Panc1 (cell line): ENCODE measurements at regions of chr22 and their contacts with region 1.

Region 1: GRCh38 chr22:43853328-43853931 is 8.9 kb downstream of the SULT4A1 start:
- DNase-seq: no peak
- ATAC-seq: no peak
- H3K4me3 ChIP-seq: no peak overlapping the region
- H3K27ac ChIP-seq: no peak overlapping the region
- H3K4me1 ChIP-seq: no peaks in the 10 kb centered on the region
- H3K27me3 ChIP-seq: no peaks in the 10 kb centered on the region
- CTCF ChIP-seq: no peak

Region 2: GRCh38 chr22:43207849-43208702 is 645.4 kb before region 1 on chr22:
- CTCF ChIA-PET with region 1: no interaction called
- POLR2A ChIA-PET with region 1: interaction called, 10 read pairs
- in situ Hi-C with region 1: no loop called
- intact Hi-C with region 1: no loop called
- DNase-seq: no peak
- ATAC-seq: no peak
- H3K4me3 ChIP-seq: no peak overlapping the region
- H3K27ac ChIP-seq: no peak overlapping the region
- H3K4me1 ChIP-seq: no peaks in the 10 kb centered on the region
- H3K27me3 ChIP-seq: no peaks in the 10 kb centered on the region
- CTCF ChIP-seq: no peak

Region 3: DNA sequence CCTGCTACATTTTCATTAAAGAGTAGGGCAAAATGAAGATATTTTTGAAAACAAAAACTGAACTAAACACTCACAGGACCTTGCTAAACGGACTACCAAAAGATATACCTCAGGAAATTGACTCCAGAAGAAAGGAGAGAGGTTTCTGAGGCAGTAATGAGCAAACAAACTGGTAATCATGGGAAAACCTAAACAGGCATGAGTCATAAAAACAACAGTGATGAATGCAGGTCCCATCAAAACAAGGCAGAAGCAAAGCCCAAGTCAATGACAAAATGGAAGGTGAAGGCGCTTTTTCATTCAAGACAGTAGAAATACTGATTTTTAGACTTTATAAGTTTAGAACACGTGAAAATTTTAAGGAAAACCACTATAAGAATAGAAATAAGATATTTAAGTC is 145.8 kb before region 1 on chr22:
- CTCF ChIA-PET with region 1: no interaction called
- POLR2A ChIA-PET with region 1: no interaction called
- in situ Hi-C with region 1: no loop called
- intact Hi-C with region 1: no loop called
- DNase-seq: peak; percentile 46
- ATAC-seq: peak; percentile 69; the same call in 1 of the 2 replicates
- H3K4me3 ChIP-seq: no peak overlapping the region
- H3K27ac ChIP-seq: no peak overlapping the region
- H3K4me1 ChIP-seq: no peaks in the 10 kb centered on the region
- H3K27me3 ChIP-seq: no peaks in the 10 kb centered on the region
- CTCF ChIP-seq: no peak

Region 4: GRCh38 chr22:43867839-43868652 is 14.6 kb after region 1 on chr22:
- CTCF ChIA-PET with region 1: no interaction called
- POLR2A ChIA-PET with region 1: no interaction called
- in situ Hi-C with region 1: no loop called
- intact Hi-C with region 1: no loop called
- DNase-seq: no peak
- ATAC-seq: no peak
- H3K4me3 ChIP-seq: no peak overlapping the region
- H3K27ac ChIP-seq: no peak overlapping the region
- H3K4me1 ChIP-seq: no peaks in the 10 kb centered on the region
- H3K27me3 ChIP-seq: no peaks in the 10 kb centered on the region; the same call in 1 of the 2 replicates
- CTCF ChIP-seq: no peak

Region 5: DNA sequence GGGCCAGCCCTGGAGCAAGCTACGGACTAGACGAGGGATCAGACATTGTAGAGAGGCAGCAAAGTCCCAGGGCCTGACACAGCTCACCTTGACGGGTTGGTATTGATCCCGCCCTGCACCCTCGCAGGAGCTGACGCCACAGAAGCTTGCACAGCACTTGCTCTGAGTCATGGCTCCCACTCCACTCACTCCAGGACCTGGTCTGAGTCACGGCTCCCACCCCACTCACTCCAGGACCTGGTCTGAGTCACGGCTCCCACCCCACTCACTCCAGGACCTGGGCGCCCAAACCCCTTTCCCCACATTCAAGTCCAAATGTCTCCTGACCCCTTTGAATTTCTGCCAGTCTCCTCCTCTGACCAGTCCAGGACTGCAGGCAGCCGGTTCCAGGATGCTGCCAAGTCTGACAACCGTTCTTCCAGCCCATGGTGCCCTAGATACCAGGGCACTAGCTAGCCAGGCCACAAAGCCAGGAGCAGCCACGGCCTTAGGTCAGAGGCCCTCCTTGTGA is 44.4 kb after region 1 on chr22:
- CTCF ChIA-PET with region 1: no interaction called
- POLR2A ChIA-PET with region 1: no interaction called
- in situ Hi-C with region 1: no loop called
- intact Hi-C with region 1: no loop called
- DNase-seq: no peak
- ATAC-seq: peak; percentile 38
- H3K4me3 ChIP-seq: no peak overlapping the region
- H3K27ac ChIP-seq: no peak overlapping the region
- H3K4me1 ChIP-seq: no peaks in the 10 kb centered on the region
- H3K27me3 ChIP-seq: no peaks in the 10 kb centered on the region
- CTCF ChIP-seq: no peak